ENCODE measurements at regions of chr2 and their contacts with region 1.

Region 1: GRCh38 chr2:68594674-68595492 is 48.5 kb upstream of the PROKR1 start:
- DNase-seq: peak; percentile 21
- ATAC-seq: peak; percentile 52
- H3K4me3 Mint-ChIP-seq: peak overlapping the region; percentile 0
- H3K27ac Mint-ChIP-seq: no peak overlapping the region
- H3K4me1 Mint-ChIP-seq: peaks cover 12% of the 10 kb centered on the region
- H3K27me3 Mint-ChIP-seq: peaks cover 5% of the 10 kb centered on the region
- CTCF ChIP-seq: peak; percentile 64

Region 2: GRCh38 chr2:68487773-68488355 is 107.0 kb before region 1 on chr2:
- CTCF ChIA-PET with region 1: interaction called, 10 read pairs
- POLR2A ChIA-PET with region 1: no interaction called
- intact Hi-C with region 1: no loop called
- DNase-seq: no peak
- ATAC-seq: peak; percentile 54
- H3K4me3 Mint-ChIP-seq: no peak overlapping the region
- H3K27ac Mint-ChIP-seq: no peak overlapping the region
- H3K4me1 Mint-ChIP-seq: peaks cover 5% of the 10 kb centered on the region
- H3K27me3 Mint-ChIP-seq: no peaks in the 10 kb centered on the region
- CTCF ChIP-seq: peak; percentile 39

Region 3: GRCh38 chr2:68662466-68662865 is 67.6 kb after region 1 on chr2:
- CTCF ChIA-PET with region 1: interaction called, 4 read pairs
- POLR2A ChIA-PET with region 1: no interaction called
- intact Hi-C with region 1: loop called (anchors 10 kb)
- DNase-seq: no peak
- ATAC-seq: peak; percentile 60
- H3K4me3 Mint-ChIP-seq: no peak overlapping the region
- H3K27ac Mint-ChIP-seq: peak overlapping the region; percentile 18
- H3K4me1 Mint-ChIP-seq: peaks cover 14% of the 10 kb centered on the region
- H3K27me3 Mint-ChIP-seq: peaks cover 6% of the 10 kb centered on the region
- CTCF ChIP-seq: no peak